ENCODE measurements at regions of chrX and their contacts with region 1.

Region 1: GRCh38 chrX:119606280-119607015 is at the start of gene NKRF:
- DNase-seq: peak; percentile 94
- ATAC-seq: peak; percentile 77
- H3K4me3 ChIP-seq: peak within 1 kb of the TSS; percentile 54 to 86 (median 71)
- H3K4me3 Mint-ChIP-seq: peak within 1 kb of the TSS; percentile 97
- H3K27ac ChIP-seq: peak within 1 kb of the TSS; percentile 87 to 94
- H3K27ac Mint-ChIP-seq: peak within 1 kb of the TSS; percentile 99
- H3K4me1 ChIP-seq: peaks cover 12 to 29% of the 10 kb centered on the region in 2 donors
- H3K4me1 Mint-ChIP-seq: peaks cover 42% of the 10 kb centered on the region
- H3K27me3 ChIP-seq: no peaks in the 10 kb centered on the region
- H3K27me3 Mint-ChIP-seq: no peaks in the 10 kb centered on the region
- CTCF ChIP-seq: no peak
- total RNA-seq, gene NKRF: 16.1 and 16.2 TPM in 2 replicates

Region 2: GRCh38 chrX:119482481-119483480 is 123.7 kb before region 1 on chrX:
- CTCF ChIA-PET with region 1: no interaction called
- POLR2A ChIA-PET with region 1: no interaction called
- intact Hi-C with region 1: no loop called
- DNase-seq: peak; percentile 77
- ATAC-seq: peak; percentile 92
- H3K4me3 ChIP-seq: peak overlapping the region in 4 of 5 experiments; percentile 48 to 60 (median 55)
- H3K4me3 Mint-ChIP-seq: peak overlapping the region; percentile 88
- H3K27ac ChIP-seq: peak overlapping the region in 1 of 2 donors; percentile 15
- H3K27ac Mint-ChIP-seq: peak overlapping the region; percentile 80
- H3K4me1 ChIP-seq: peaks cover 5 to 13% of the 10 kb centered on the region in 2 donors
- H3K4me1 Mint-ChIP-seq: peaks cover 7% of the 10 kb centered on the region
- H3K27me3 ChIP-seq: no peaks in the 10 kb centered on the region
- H3K27me3 Mint-ChIP-seq: no peaks in the 10 kb centered on the region
- CTCF ChIP-seq: peak; percentile 69

Region 3: GRCh38 chrX:119574394-119575266 is 31.8 kb before region 1 on chrX and contains the start of gene UBE2A:
- CTCF ChIA-PET with region 1: interaction called, 5 read pairs
- POLR2A ChIA-PET with region 1: interaction called, 17 read pairs
- intact Hi-C with region 1: loop called (anchors 1 kb)
- DNase-seq: peak; percentile 94
- ATAC-seq: peak; percentile 94
- H3K4me3 ChIP-seq: peak within 1 kb of the TSS; percentile 42 to 77 (median 70)
- H3K4me3 Mint-ChIP-seq: peak within 1 kb of the TSS; percentile 88
- H3K27ac ChIP-seq: peak within 1 kb of the TSS; percentile 68 to 83
- H3K27ac Mint-ChIP-seq: peak within 1 kb of the TSS; percentile 88
- H3K4me1 ChIP-seq: peaks cover 26 to 32% of the 10 kb centered on the region in 2 donors
- H3K4me1 Mint-ChIP-seq: peaks cover 34% of the 10 kb centered on the region
- H3K27me3 ChIP-seq: no peaks in the 10 kb centered on the region
- H3K27me3 Mint-ChIP-seq: no peaks in the 10 kb centered on the region
- CTCF ChIP-seq: no peak
- total RNA-seq, gene UBE2A: 67.1 and 70.9 TPM in 2 replicates

Region 4: DNA sequence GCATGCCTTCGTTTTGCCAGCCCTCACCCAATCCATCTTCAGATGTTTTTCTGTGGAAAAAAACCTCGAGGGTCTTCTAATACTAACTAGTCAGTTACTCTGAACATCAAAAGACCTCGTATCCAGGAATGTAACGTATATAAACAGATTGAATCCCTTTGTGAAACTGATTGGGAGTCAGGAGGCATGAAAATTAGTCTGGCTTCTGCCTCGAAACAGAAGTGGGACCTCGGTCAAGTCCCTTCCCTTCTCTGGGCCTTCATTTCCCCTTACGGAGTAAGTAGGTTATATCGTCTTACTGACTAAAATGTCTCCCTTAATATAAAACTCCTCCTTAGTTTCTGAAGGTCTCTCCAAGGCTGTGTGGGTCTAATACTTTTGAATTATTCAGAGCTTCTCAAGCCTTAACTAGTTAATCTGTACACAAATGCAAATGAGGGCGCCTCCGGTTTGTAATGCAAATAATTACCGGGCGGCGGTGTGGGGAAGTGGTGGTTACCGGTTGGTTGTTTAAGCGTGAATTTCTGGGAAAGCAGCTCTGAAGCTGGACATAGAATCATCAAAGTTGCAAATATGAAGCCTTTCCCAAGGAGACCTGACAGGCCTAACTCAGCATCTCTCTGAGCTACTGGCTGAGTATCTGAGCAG is 11.2 kb after region 1 on chrX:
- CTCF ChIA-PET with region 1: interaction called, 5 read pairs
- POLR2A ChIA-PET with region 1: interaction called, 3 read pairs
- intact Hi-C with region 1: loop called (anchors 1 kb)
- DNase-seq: peak; percentile 71
- ATAC-seq: peak; percentile 48
- H3K4me3 ChIP-seq: peak overlapping the region; percentile 20 to 63 (median 35)
- H3K4me3 Mint-ChIP-seq: peak overlapping the region; percentile 83
- H3K27ac ChIP-seq: peak overlapping the region; percentile 68 to 69
- H3K27ac Mint-ChIP-seq: peak overlapping the region; percentile 90
- H3K4me1 ChIP-seq: peaks cover 58 to 69% of the 10 kb centered on the region in 2 donors
- H3K4me1 Mint-ChIP-seq: peaks cover 59% of the 10 kb centered on the region
- H3K27me3 ChIP-seq: no peaks in the 10 kb centered on the region
- H3K27me3 Mint-ChIP-seq: no peaks in the 10 kb centered on the region
- CTCF ChIP-seq: no peak

Region 5: DNA sequence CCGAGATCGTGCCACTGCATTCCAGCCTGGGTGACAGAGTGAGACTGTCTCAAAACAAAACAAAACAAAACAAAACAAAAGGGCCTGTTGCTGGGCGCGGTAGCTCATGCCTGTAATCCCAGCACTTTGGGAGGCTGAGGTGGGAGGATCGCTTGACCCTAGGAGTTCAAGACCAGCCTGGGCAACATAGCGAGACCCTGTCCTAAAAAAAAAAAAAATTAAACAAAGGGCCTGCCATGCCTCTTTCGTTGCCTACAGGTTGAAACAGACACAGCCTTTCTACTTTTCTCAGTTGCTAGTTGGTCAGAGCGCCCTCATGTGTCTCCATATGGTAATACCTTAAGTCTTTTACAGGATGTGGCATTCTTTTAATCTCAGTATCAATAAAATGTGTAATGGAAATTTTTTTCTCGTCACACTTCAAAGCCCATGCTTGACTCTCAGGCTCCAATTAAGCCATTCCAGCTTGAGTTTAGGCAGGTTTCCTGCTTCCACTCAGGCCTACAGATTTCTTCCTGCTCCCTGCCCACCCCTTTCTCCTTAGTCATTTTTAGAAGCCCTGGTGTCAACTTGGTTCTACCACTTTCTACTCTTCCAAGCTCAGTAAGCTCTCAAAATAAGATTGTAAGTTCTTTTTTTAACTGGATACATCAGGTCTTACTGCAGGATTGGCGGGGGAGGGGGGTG is 147.3 kb after region 1 on chrX:
- CTCF ChIA-PET with region 1: interaction called, 4 read pairs
- POLR2A ChIA-PET with region 1: interaction called, 5 read pairs
- intact Hi-C with region 1: loop called (anchors 2 kb)
- DNase-seq: peak; percentile 69
- ATAC-seq: peak; percentile 11
- H3K4me3 ChIP-seq: no peak overlapping the region
- H3K4me3 Mint-ChIP-seq: peak overlapping the region; percentile 59
- H3K27ac ChIP-seq: peak overlapping the region; percentile 37 to 89
- H3K27ac Mint-ChIP-seq: peak overlapping the region; percentile 96
- H3K4me1 ChIP-seq: peaks cover 43 to 47% of the 10 kb centered on the region in 2 donors
- H3K4me1 Mint-ChIP-seq: peaks cover 41% of the 10 kb centered on the region
- H3K27me3 ChIP-seq: no peaks in the 10 kb centered on the region
- H3K27me3 Mint-ChIP-seq: no peaks in the 10 kb centered on the region
- CTCF ChIP-seq: peak; percentile 63

Region 6: GRCh38 chrX:119778829-119779228 is 172.4 kb after region 1 on chrX:
- CTCF ChIA-PET with region 1: no interaction called
- POLR2A ChIA-PET with region 1: no interaction called
- intact Hi-C with region 1: loop called (anchors 1 kb)
- DNase-seq: no peak
- ATAC-seq: no peak
- H3K4me3 ChIP-seq: no peak overlapping the region
- H3K4me3 Mint-ChIP-seq: no peak overlapping the region
- H3K27ac ChIP-seq: no peak overlapping the region
- H3K27ac Mint-ChIP-seq: peak overlapping the region; percentile 32
- H3K4me1 ChIP-seq: peaks cover 4 to 24% of the 10 kb centered on the region in 2 donors
- H3K4me1 Mint-ChIP-seq: peaks cover 27% of the 10 kb centered on the region
- H3K27me3 ChIP-seq: no peaks in the 10 kb centered on the region
- H3K27me3 Mint-ChIP-seq: no peaks in the 10 kb centered on the region
- CTCF ChIP-seq: no peak

Measured in B cell (primary cell).